ENCODE measurements at regions of chr3 and their contacts with region 1.

Region 1: GRCh38 chr3:119352849-119353502 is 58.8 kb downstream of the ARHGAP31 start:
- DNase-seq: peak; percentile 13
- H3K4me3 Mint-ChIP-seq: no peak overlapping the region
- H3K27ac Mint-ChIP-seq: peak overlapping the region; percentile 43
- H3K4me1 Mint-ChIP-seq: peaks cover 30% of the 10 kb centered on the region
- H3K27me3 Mint-ChIP-seq: no peaks in the 10 kb centered on the region

Region 2: DNA sequence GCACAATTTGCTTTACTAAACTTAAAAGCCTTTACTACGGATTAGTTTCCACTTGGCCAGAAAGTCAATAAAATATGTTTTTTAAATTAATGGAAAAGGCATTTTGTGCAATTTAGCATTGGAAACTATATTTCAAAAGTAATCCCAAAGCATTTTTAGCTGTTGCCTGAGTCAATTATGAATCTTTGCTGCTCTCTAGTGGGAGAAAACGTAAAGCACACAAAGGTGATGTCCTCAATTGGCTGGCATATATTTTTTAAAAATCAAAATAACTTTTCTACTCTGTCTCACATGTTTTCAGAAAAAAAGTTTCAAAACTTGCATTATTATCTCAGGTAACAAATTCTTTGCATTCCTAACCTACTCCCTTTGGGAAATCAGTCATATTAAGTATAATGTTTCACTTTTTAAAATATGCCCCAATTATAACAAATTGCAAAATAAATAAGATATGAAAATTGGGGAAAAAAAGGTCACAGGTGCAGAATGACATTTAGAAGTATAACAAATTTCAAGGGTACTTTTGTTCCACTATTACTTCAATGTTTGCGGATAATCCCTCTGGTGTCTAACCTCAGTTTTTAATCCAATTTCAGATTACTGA is 254.3 kb before region 1 on chr3:
- CTCF ChIA-PET with region 1: interaction called, 3 read pairs
- intact Hi-C with region 1: loop called (anchors 2 kb)
- DNase-seq: no peak
- H3K4me3 Mint-ChIP-seq: no peak overlapping the region
- H3K27ac Mint-ChIP-seq: no peak overlapping the region
- H3K4me1 Mint-ChIP-seq: no peaks in the 10 kb centered on the region
- H3K27me3 Mint-ChIP-seq: no peaks in the 10 kb centered on the region

Region 3: DNA sequence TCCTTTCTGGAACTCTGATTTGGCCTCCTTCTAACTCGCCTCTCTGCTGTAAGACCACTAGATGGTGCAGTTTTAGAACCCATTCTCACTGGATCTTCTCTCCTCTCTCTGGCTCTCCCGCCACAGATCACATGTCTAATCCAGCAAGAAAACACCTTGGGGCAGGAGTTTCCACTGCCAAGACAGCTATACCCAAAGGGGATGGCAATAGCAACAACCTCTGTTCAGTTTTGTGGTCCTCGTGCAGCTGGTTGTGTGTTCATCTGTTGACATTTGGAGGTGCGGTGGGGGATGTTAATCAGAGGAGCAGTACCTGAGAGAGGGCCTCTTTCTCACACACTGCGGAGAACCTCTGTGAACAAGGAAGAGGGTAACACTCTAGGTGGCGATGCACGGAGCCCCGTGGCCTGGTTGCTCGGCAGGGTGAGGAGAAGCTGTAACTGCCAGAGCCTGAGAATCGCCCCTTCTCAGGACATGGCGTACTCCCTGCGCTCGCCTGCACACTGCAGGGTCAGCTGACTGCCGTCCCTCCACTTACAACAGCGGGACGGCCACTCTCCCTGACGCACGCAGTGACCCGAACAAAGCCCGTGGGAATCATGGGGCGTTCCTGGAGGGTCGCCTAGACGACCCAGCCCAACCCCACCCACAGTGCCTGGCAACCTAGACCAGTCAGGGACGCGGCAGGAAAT is 207.3 kb before region 1 on chr3 and contains the start of gene TEX55:
- CTCF ChIA-PET with region 1: interaction called, 6 read pairs
- intact Hi-C with region 1: loop called (anchors 1 kb)
- DNase-seq: peak; percentile 31
- H3K4me3 Mint-ChIP-seq: no peak within 1 kb of the TSS
- H3K27ac Mint-ChIP-seq: no peak within 1 kb of the TSS
- H3K4me1 Mint-ChIP-seq: peaks cover 5% of the 10 kb centered on the region
- H3K27me3 Mint-ChIP-seq: no peaks in the 10 kb centered on the region
- total RNA-seq, gene TEX55: not detected

Region 4: GRCh38 chr3:119279101-119279554 is 73.8 kb before region 1 on chr3:
- CTCF ChIA-PET with region 1: interaction called, 52 read pairs
- intact Hi-C with region 1: loop called (anchors 1 kb)
- DNase-seq: no peak
- H3K4me3 Mint-ChIP-seq: no peak overlapping the region
- H3K27ac Mint-ChIP-seq: no peak overlapping the region
- H3K4me1 Mint-ChIP-seq: peaks cover 19% of the 10 kb centered on the region
- H3K27me3 Mint-ChIP-seq: no peaks in the 10 kb centered on the region

Region 5: GRCh38 chr3:119322835-119323722 is 29.9 kb before region 1 on chr3:
- CTCF ChIA-PET with region 1: interaction called, 5 read pairs
- intact Hi-C with region 1: loop called (anchors 1 kb)
- DNase-seq: peak; percentile 96
- H3K4me3 Mint-ChIP-seq: peak overlapping the region; percentile 83
- H3K27ac Mint-ChIP-seq: peak overlapping the region; percentile 94
- H3K4me1 Mint-ChIP-seq: peaks cover 47% of the 10 kb centered on the region
- H3K27me3 Mint-ChIP-seq: no peaks in the 10 kb centered on the region

Region 6: GRCh38 chr3:119463171-119464169 is 110.5 kb after region 1 on chr3 and contains the start of gene TMEM39A:
- CTCF ChIA-PET with region 1: no interaction called
- intact Hi-C with region 1: no loop called
- DNase-seq: peak; percentile 98
- H3K4me3 Mint-ChIP-seq: peak within 1 kb of the TSS; percentile 96
- H3K27ac Mint-ChIP-seq: peak within 1 kb of the TSS; percentile 90
- H3K4me1 Mint-ChIP-seq: peaks cover 32% of the 10 kb centered on the region
- H3K27me3 Mint-ChIP-seq: no peaks in the 10 kb centered on the region
- total RNA-seq, gene TMEM39A: 21.4 to 26.9 TPM

Region 7: GRCh38 chr3:119613201-119613600 is 260.2 kb after region 1 on chr3:
- CTCF ChIA-PET with region 1: no interaction called
- intact Hi-C with region 1: no loop called
- DNase-seq: no peak
- H3K4me3 Mint-ChIP-seq: no peak overlapping the region
- H3K27ac Mint-ChIP-seq: no peak overlapping the region
- H3K4me1 Mint-ChIP-seq: no peaks in the 10 kb centered on the region
- H3K27me3 Mint-ChIP-seq: peaks cover 23% of the 10 kb centered on the region